ENCODE measurements at regions of chr11 and their contacts with region 1.

Region 1: DNA sequence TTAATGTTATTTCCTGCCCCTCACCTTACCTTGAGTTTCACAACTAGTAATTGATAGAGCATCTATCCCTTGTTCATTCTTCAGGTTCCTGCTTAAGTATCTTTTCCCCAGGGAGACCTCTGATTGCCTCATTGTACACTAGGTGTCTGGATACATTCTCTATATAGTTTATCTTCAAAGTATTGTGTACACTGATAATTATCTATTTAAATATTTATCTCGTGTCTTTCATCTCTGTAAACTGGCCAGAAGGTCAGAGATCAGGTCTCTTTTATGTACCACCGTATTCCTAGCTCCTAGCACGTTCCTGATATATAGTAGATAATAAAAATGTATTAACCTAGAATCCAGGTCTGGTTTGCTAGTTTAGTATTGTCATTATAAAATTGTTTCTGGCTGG is 6.4 kb downstream of the TMEM126B start:
- DNase-seq: no peak
- H3K4me3 ChIP-seq: no peak overlapping the region
- H3K27ac ChIP-seq: no peak overlapping the region
- H3K4me1 ChIP-seq: peaks cover 6% of the 10 kb centered on the region
- H3K27me3 ChIP-seq: no peaks in the 10 kb centered on the region
- CTCF ChIP-seq: no peak

Region 2: GRCh38 chr11:86955361-86956120 is 1320.8 kb after region 1 on chr11 and contains the start of gene FZD4:
- CTCF ChIA-PET with region 1: no interaction called
- POLR2A ChIA-PET with region 1: interaction called, 10 read pairs
- intact Hi-C with region 1: no loop called
- DNase-seq: peak; percentile 77 to 91
- H3K4me3 ChIP-seq: peak within 1 kb of the TSS; percentile 85
- H3K27ac ChIP-seq: peak within 1 kb of the TSS; percentile 56
- H3K4me1 ChIP-seq: peaks cover 16% of the 10 kb centered on the region
- H3K27me3 ChIP-seq: no peaks in the 10 kb centered on the region
- CTCF ChIP-seq: peak; percentile 54; the same call in 1 of the 2 replicates
- total RNA-seq, gene FZD4: 2.6 TPM in 2 replicates

Region 3: DNA sequence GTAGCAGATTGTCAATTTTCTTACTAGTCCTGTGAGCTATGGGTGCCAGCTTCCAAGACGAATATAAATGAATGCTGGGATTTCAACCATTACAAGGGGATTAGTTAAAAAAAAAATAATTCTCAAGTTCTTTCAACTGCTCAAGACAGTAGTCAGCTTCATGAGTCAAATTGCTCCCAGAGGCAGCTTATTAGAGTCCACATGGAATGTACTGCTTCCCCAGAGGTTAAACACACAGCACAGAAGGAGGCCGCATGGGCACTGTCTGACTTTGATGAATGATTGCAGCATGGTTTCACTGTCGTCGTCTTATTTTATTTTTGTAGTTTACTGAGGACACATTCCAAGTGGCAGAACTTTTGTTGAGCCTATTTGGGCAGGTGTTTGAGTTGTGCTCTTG is 1966.2 kb after region 1 on chr11:
- CTCF ChIA-PET with region 1: no interaction called
- POLR2A ChIA-PET with region 1: no interaction called
- intact Hi-C with region 1: no loop called
- DNase-seq: no peak
- H3K4me3 ChIP-seq: no peak overlapping the region
- H3K27ac ChIP-seq: no peak overlapping the region
- H3K4me1 ChIP-seq: no peaks in the 10 kb centered on the region
- H3K27me3 ChIP-seq: no peaks in the 10 kb centered on the region
- CTCF ChIP-seq: no peak

Measured in PC-9 (cell line).